ENCODE measurements at regions of chr10 and their contacts with region 1.

Region 1: GRCh38 chr10:91350651-91351081 is 59.5 kb upstream of the HECTD2 start:
- DNase-seq: no peak
- H3K4me3 ChIP-seq: no peak overlapping the region
- H3K4me3 Mint-ChIP-seq: no peak overlapping the region
- H3K27ac ChIP-seq: no peak overlapping the region
- H3K27ac Mint-ChIP-seq: no peak overlapping the region
- H3K4me1 ChIP-seq: no peaks in the 10 kb centered on the region
- H3K4me1 Mint-ChIP-seq: no peaks in the 10 kb centered on the region
- H3K27me3 ChIP-seq: no peaks in the 10 kb centered on the region
- H3K27me3 Mint-ChIP-seq: peaks cover 6 to 16% of the 10 kb centered on the region in 2 donors

Region 2: GRCh38 chr10:91127341-91128082 is 223.2 kb before region 1 on chr10:
- CTCF ChIA-PET with region 1: no interaction called
- POLR2A ChIA-PET with region 1: interaction called, 12 read pairs
- DNase-seq: no peak
- H3K4me3 ChIP-seq: no peak overlapping the region
- H3K4me3 Mint-ChIP-seq: no peak overlapping the region
- H3K27ac ChIP-seq: no peak overlapping the region
- H3K27ac Mint-ChIP-seq: no peak overlapping the region
- H3K4me1 ChIP-seq: no peaks in the 10 kb centered on the region
- H3K4me1 Mint-ChIP-seq: peaks cover 4 to 6% (median 6%) of the 10 kb centered on the region in 3 donors
- H3K27me3 ChIP-seq: no peaks in the 10 kb centered on the region
- H3K27me3 Mint-ChIP-seq: peaks cover 7 to 15% of the 10 kb centered on the region in 2 donors